Activated T-helper 2 cell treated with anti-CD3 and anti-CD28 coated beads, Interferon-gamma antibody, Interleukin-2, Interleukin-4, amounts not matched to agents 10 μg/mL and 5 μg/mL and 100 μg/mL, durations not matched to agents 14 hours and 24 hours and 36 hours (primary cell): ENCODE measurements at regions of chr12 and their contacts with region 1.

Region 1: GRCh38 chr12:38906482-38907170 is 1.2 kb upstream of the CPNE8 start:
- DNase-seq: peak; percentile 63
- H3K4me3 Mint-ChIP-seq: peak overlapping the region; percentile 89
- H3K27ac Mint-ChIP-seq: peak overlapping the region; percentile 87
- H3K4me1 Mint-ChIP-seq: peaks cover 30% of the 10 kb centered on the region
- H3K27me3 Mint-ChIP-seq: peaks cover 19% of the 10 kb centered on the region

Region 2: GRCh38 chr12:38138225-38139221 is 768.1 kb before region 1 on chr12:
- intact Hi-C with region 1: loop called (anchors 5 kb)
- DNase-seq: peak; percentile 26
- H3K4me3 Mint-ChIP-seq: peak overlapping the region; percentile 78
- H3K27ac Mint-ChIP-seq: no peak overlapping the region
- H3K4me1 Mint-ChIP-seq: peaks cover 8% of the 10 kb centered on the region
- H3K27me3 Mint-ChIP-seq: no peaks in the 10 kb centered on the region

Region 3: GRCh38 chr12:38324896-38325295 is 581.7 kb before region 1 on chr12:
- intact Hi-C with region 1: loop called (anchors 5 kb)
- DNase-seq: no peak
- H3K4me3 Mint-ChIP-seq: no peak overlapping the region
- H3K27ac Mint-ChIP-seq: no peak overlapping the region
- H3K4me1 Mint-ChIP-seq: no peaks in the 10 kb centered on the region
- H3K27me3 Mint-ChIP-seq: no peaks in the 10 kb centered on the region

Region 4: DNA sequence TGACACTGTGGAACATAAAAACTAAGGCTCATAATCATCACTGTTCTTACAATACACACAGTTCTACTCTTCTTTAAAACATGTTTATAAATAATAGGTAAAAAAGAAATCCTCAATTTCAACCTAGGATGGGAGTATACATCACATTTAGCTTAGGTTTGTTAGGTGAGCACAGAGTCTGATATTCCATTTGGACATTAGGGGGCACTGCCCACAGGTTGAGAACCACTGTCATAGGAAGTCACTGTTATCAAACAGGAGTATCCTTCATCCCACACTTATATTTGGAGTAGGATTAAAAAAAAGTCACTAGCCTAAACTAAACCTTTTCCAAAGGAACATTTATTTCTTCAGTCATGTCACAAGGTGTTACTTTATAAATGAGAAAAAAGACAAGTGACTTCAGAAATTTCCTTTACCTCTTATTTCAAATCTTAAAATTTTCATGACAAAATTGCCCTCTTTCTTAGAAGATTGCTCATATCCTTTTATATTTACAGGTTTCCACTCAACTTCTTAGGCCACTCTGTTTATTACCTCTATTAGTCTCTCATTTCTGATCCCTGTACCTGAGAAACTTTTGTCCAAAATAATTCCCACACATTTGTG is 241.9 kb before region 1 on chr12:
- intact Hi-C with region 1: loop called (anchors 10 kb)
- DNase-seq: no peak
- H3K4me3 Mint-ChIP-seq: no peak overlapping the region
- H3K27ac Mint-ChIP-seq: no peak overlapping the region
- H3K4me1 Mint-ChIP-seq: no peaks in the 10 kb centered on the region
- H3K27me3 Mint-ChIP-seq: no peaks in the 10 kb centered on the region

Region 5: GRCh38 chr12:38775457-38775856 is 131.2 kb before region 1 on chr12:
- intact Hi-C with region 1: loop called (anchors 2 kb)
- DNase-seq: no peak
- H3K4me3 Mint-ChIP-seq: no peak overlapping the region
- H3K27ac Mint-ChIP-seq: peak overlapping the region; percentile 39
- H3K4me1 Mint-ChIP-seq: peaks cover 11% of the 10 kb centered on the region
- H3K27me3 Mint-ChIP-seq: no peaks in the 10 kb centered on the region

Region 6: GRCh38 chr12:38995249-38995648 is 88.6 kb after region 1 on chr12:
- intact Hi-C with region 1: no loop called
- DNase-seq: no peak
- H3K4me3 Mint-ChIP-seq: no peak overlapping the region
- H3K27ac Mint-ChIP-seq: no peak overlapping the region
- H3K4me1 Mint-ChIP-seq: no peaks in the 10 kb centered on the region
- H3K27me3 Mint-ChIP-seq: no peaks in the 10 kb centered on the region

Region 7: DNA sequence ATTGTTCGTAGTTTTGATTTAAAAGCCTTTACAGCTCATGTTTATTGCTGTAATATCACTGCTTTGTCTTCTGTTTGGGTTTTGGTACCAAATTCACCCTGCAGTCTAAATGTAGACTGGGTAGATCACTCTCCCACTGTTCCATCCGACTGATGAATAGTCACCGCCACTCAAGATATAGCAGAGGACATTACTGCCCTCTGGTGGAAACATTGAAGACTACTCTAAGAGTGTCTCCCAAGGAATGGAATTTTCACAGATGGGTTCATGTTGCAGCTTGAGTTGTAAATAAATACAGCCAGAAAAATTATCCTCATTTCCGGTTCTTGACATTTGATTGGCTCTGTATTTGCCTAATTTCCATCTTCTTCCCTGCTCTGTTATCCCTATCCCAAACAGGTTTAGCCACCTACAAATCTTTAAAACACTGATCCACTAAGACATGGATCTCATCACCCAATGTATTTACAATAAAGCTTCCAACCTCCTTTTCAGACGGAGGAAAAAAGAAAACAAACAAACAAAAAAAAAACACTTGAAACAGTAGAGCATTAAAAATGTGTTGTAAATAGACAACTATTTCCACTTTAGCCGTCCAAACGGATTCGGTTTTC is 197.0 kb after region 1 on chr12:
- intact Hi-C with region 1: loop called (anchors 1 kb)
- DNase-seq: no peak
- H3K4me3 Mint-ChIP-seq: no peak overlapping the region
- H3K27ac Mint-ChIP-seq: no peak overlapping the region
- H3K4me1 Mint-ChIP-seq: no peaks in the 10 kb centered on the region
- H3K27me3 Mint-ChIP-seq: peaks cover 1% of the 10 kb centered on the region

Region 8: DNA sequence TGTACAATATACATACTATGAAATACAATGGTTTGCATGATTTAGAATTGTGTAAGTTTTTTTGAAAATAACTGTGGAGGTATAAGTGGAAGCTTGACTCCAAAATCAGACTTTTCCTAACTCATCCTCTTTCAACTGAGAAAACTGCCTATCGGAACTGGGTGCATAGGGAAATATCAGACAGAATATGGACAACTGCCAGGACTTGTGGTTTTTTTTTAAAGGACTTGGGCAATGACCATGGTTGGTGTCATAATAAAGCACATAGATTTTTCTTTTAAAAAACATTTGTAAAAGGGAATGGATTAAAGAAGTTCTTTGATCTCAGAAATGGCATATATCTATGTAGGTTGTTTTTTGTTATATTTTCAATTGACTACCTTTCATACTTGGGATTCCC is 1264.9 kb after region 1 on chr12:
- intact Hi-C with region 1: no loop called
- DNase-seq: no peak
- H3K4me3 Mint-ChIP-seq: no peak overlapping the region
- H3K27ac Mint-ChIP-seq: no peak overlapping the region
- H3K4me1 Mint-ChIP-seq: peaks cover 19% of the 10 kb centered on the region
- H3K27me3 Mint-ChIP-seq: peaks cover 20% of the 10 kb centered on the region